ENCODE measurements at regions of chr3 and their contacts with region 1.

Region 1: DNA sequence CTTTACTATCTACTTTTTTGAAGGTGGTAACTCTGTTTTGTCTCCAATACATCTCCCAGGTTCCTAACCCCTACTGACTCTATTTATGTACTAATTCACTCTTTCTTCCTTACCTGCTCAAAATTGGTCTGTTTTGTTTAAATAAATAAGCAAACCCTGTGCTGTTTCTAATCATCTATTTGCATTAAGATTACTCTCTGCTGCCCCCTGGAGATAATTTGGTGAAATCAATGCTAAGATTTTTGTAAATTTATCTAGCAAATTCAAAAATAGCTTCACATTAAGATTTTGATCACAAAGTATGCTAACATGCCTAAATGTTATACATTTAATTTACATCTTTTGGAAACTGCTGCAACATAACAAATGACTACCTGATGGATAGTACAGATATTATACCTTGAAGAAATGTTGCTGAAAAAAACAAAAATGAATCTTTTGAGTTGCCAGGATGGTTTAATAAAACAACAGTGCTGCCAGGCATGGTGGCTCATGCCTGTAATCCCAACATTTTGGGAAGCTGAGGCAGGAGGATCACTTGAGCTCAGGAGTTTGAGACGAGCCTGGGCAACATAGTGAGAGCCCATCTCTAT is 4.4 kb upstream of the CD200R1 start:
- DNase-seq: no peak
- ATAC-seq: peak; percentile 51
- H3K4me3 ChIP-seq: no peak overlapping the region
- H3K27ac ChIP-seq: no peak overlapping the region
- H3K4me1 ChIP-seq: peaks cover 25% of the 10 kb centered on the region
- H3K27me3 ChIP-seq: no peaks in the 10 kb centered on the region
- CTCF ChIP-seq: peak; percentile 35 to 62 (median 49); a peak in 4 of 6 replicates
- EP300 ChIP-seq: no peak
- POLR2A ChIP-seq: no peak
- RAD21 ChIP-seq: peak; percentile 74

Region 2: DNA sequence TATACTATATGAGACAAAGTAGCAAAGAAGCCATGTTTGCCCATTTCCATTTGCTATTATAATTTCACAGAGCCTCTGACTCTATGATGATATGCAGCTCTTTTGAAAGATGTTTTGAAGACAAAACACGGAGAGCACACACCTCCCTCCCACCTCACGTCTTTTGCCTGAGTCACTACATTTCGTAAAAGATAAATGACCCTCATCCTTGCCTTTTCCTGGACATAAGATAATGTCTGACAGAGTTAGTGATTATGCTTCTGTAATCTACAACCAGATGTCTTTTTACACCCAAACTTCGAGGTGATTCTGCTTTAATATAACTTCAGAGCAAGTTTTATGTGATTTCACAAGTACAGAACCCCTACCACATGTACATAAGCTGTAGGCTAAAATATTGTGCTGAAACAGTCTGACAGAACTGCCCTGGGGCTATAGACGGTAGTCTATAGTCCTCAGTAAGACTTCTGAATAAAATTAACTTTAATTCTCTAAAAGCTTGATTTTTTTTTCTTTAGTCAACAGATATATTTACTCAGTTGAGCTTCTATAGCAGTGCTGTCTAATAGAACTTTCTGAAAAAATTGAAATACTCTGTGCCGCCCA is 232.6 kb before region 1 on chr3:
- CTCF ChIA-PET with region 1: interaction called, 19 read pairs
- POLR2A ChIA-PET with region 1: interaction called, 5 read pairs
- RAD21 ChIA-PET with region 1: interaction called, 3 read pairs
- SMC1A ChIA-PET with region 1: interaction called, 10 read pairs
- in situ Hi-C with region 1: no loop called
- intact Hi-C with region 1: no loop called
- DNase-seq: no peak
- ATAC-seq: no peak
- H3K4me3 ChIP-seq: no peak overlapping the region
- H3K27ac ChIP-seq: no peak overlapping the region
- H3K4me1 ChIP-seq: no peaks in the 10 kb centered on the region
- H3K27me3 ChIP-seq: no peaks in the 10 kb centered on the region; a peak in 1 of 4 replicates
- CTCF ChIP-seq: no peak
- EP300 ChIP-seq: no peak
- POLR2A ChIP-seq: no peak
- RAD21 ChIP-seq: no peak

Region 3: DNA sequence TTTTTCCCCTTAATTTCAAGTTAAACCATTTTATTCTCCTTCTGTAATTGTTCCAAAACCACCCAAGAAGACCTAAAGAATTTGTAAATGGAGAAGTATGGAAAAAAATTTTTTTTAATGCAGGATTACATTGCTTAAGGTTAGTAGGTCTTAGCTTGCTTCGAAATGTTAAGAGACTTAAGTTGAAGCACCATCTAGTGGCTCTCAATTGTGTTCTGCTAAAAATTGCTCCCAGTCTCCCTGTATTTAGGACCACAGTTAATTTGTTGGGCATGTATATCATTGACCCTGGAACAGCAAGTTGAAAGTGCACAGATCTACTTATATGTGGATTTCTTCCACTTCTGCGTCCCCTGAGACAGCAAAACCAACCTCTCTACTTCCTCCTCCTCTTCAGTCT is 165.1 kb before region 1 on chr3:
- CTCF ChIA-PET with region 1: interaction called, 14 read pairs
- POLR2A ChIA-PET with region 1: no interaction called
- RAD21 ChIA-PET with region 1: interaction called, 5 read pairs
- SMC1A ChIA-PET with region 1: interaction called, 12 read pairs
- in situ Hi-C with region 1: no loop called
- intact Hi-C with region 1: loop called (anchors 5 kb)
- DNase-seq: no peak
- ATAC-seq: peak; percentile 29; the same call in 1 of the 3 replicates
- H3K4me3 ChIP-seq: no peak overlapping the region
- H3K27ac ChIP-seq: no peak overlapping the region
- H3K4me1 ChIP-seq: peaks cover 19% of the 10 kb centered on the region
- H3K27me3 ChIP-seq: no peaks in the 10 kb centered on the region
- CTCF ChIP-seq: peak; percentile 1 to 12 (median 10); a peak in 1 of 6 replicates
- EP300 ChIP-seq: no peak
- POLR2A ChIP-seq: no peak
- RAD21 ChIP-seq: peak; percentile 40

Region 4: GRCh38 chr3:112966633-112967032 is 12.7 kb before region 1 on chr3:
- CTCF ChIA-PET with region 1: interaction called, 18 read pairs
- POLR2A ChIA-PET with region 1: interaction called, 6 read pairs
- RAD21 ChIA-PET with region 1: interaction called, 8 read pairs
- SMC1A ChIA-PET with region 1: interaction called, 26 read pairs
- in situ Hi-C with region 1: no loop called
- intact Hi-C with region 1: no loop called
- DNase-seq: no peak
- ATAC-seq: no peak; the same call in 2 of the 3 replicates
- H3K4me3 ChIP-seq: no peak overlapping the region
- H3K27ac ChIP-seq: 0 out of 2 replicates have a peak overlapping the region, but pooled peaks have one; percentile 44
- H3K4me1 ChIP-seq: peaks cover 25% of the 10 kb centered on the region
- H3K27me3 ChIP-seq: no peaks in the 10 kb centered on the region
- CTCF ChIP-seq: no peak
- EP300 ChIP-seq: no peak
- POLR2A ChIP-seq: no peak
- RAD21 ChIP-seq: no peak

Region 5: DNA sequence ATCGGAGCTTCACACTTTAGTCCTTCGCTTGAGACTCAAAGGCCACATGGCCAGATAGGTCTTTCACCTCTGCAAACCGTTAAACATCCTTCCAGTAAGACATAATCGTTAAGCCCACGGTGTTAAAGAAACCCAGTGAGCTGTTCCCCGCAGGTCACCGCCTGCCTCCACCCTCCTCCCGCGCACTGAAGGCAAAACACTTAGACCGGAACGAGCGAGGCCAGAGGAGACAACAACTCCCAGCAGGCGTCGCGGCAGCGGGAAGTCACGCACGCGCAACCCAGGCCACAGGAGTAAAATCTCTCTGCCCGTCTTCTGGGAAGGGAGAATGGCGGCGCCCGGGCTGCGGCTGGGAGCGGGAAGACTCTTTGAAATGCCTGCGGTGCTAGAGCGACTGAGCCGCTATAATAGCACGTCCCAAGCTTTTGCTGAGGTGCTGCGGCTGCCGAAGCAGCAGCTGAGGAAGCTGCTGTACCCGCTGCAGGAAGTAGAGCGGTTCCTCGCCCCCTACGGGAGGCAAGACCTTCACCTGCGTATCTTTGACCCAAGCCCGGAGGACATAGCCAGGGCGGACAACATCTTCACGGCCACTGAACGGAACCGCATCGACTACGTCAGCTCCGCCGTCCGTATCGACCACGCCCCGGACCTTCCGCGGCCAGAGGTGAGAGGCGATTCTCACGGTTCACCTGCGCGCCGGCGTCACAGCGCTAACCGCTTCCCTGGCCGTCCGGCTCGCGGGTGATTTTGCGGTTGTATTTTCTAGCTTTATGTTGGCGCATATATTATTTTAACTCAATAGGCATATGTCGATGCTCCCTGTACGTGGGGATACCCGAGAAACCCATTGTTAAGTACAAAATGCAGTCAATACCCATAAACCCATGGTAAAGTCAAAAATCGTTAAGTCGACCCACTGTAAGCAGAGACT is 11.6 kb after region 1 on chr3 and contains the start of gene GTPBP8:
- CTCF ChIA-PET with region 1: interaction called, 39 read pairs
- POLR2A ChIA-PET with region 1: no interaction called
- RAD21 ChIA-PET with region 1: interaction called, 9 read pairs
- SMC1A ChIA-PET with region 1: interaction called, 10 read pairs
- in situ Hi-C with region 1: no loop called
- intact Hi-C with region 1: no loop called
- DNase-seq: peak; percentile 69
- ATAC-seq: peak; percentile 94
- H3K4me3 ChIP-seq: peak within 1 kb of the TSS; percentile 69
- H3K27ac ChIP-seq: peak within 1 kb of the TSS; percentile 90
- H3K4me1 ChIP-seq: peaks cover 6% of the 10 kb centered on the region
- H3K27me3 ChIP-seq: no peaks in the 10 kb centered on the region
- CTCF ChIP-seq: no peak
- EP300 ChIP-seq: peak; percentile 65 to 82; a peak in 3 of 4 replicates
- POLR2A ChIP-seq: peak; percentile 88
- RAD21 ChIP-seq: no peak
- polyA plus RNA-seq, gene GTPBP8: 18.8 to 29.0 TPM

Region 6: DNA sequence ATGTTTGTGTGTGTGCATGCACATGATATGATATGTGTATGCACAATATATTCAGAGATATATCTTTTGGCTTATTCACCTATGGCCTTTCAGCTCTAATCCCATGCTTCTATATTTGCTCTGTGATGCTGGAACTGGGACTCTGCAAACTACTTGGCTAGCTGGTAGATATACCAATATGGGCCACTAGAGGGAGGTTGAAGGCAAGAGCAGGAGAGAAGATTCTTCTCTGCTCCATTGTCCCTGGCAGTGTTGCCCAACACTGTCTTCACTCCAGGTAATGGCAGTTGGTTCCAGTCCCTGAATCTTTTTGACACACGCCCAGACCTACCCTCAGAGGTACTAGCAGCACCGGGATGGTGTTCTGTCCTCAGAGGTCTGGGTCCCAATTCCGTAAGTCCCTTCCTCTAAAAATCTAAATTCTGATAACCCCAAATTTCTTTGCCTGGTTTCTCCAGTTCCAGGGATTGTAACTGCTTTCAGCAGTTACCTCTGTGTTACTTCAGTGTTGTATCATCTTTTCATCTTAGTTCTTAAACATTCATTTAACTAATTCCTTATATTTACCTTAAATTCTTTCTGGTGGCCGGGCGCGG is 56.1 kb after region 1 on chr3:
- CTCF ChIA-PET with region 1: interaction called, 8 read pairs
- POLR2A ChIA-PET with region 1: no interaction called
- RAD21 ChIA-PET with region 1: no interaction called
- SMC1A ChIA-PET with region 1: interaction called, 10 read pairs
- in situ Hi-C with region 1: no loop called
- intact Hi-C with region 1: no loop called
- DNase-seq: no peak
- ATAC-seq: peak; percentile 95
- H3K4me3 ChIP-seq: no peak overlapping the region
- H3K27ac ChIP-seq: no peak overlapping the region
- H3K4me1 ChIP-seq: no peaks in the 10 kb centered on the region
- H3K27me3 ChIP-seq: no peaks in the 10 kb centered on the region
- CTCF ChIP-seq: peak; percentile 72 to 92 (median 85)
- EP300 ChIP-seq: no peak
- POLR2A ChIP-seq: no peak
- RAD21 ChIP-seq: peak; percentile 61